Endothelial cell of umbilical vein (primary cell): ENCODE measurements at regions of chr6 and their contacts with region 1.

Region 1: GRCh38 chr6:89411145-89412070 is 665 bp downstream of the RRAGD start:
- DNase-seq: no peak
- H3K4me3 ChIP-seq: peak overlapping the region; percentile 28 to 38 (median 34)
- H3K27ac ChIP-seq: no peak overlapping the region
- H3K4me1 ChIP-seq: peaks cover 8% of the 10 kb centered on the region
- H3K27me3 ChIP-seq: peaks cover 51 to 58% of the 10 kb centered on the region in 2 experiments
- CTCF ChIP-seq: no peak
- POLR2A ChIP-seq: no peak

Region 2: DNA sequence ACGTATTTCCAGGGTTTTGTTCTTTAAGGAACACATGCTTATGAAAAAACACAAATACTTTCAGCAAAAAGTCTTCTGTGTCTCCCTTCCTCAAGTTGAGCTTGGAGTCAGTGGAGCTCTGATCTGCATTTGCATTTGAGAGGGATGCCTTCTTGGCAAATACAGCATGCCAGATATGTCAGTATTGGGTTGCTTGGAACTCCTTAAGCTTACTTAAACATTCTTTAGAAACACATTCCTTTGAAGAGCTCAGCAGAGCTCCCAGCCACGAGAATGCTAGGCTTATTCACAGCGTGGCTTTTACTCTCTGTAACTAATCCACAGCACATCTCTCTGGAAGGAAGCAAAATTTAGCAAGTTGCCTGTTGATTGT is 89.8 kb after region 1 on chr6:
- CTCF ChIA-PET with region 1: no interaction called
- POLR2A ChIA-PET with region 1: interaction called, 10 read pairs
- dilution Hi-C with region 1: no loop called
- intact Hi-C with region 1: no loop called
- DNase-seq: no peak
- H3K4me3 ChIP-seq: no peak overlapping the region
- H3K27ac ChIP-seq: no peak overlapping the region
- H3K4me1 ChIP-seq: no peaks in the 10 kb centered on the region
- H3K27me3 ChIP-seq: peaks cover 2 to 8% of the 10 kb centered on the region in 2 experiments
- CTCF ChIP-seq: no peak
- POLR2A ChIP-seq: no peak